H1 (cell line): ENCODE measurements at regions of chr12 and their contacts with region 1.

Region 1: GRCh38 chr12:98998697-98999299 is 353.7 kb downstream of the APAF1 start:
- DNase-seq: no peak
- H3K4me3 ChIP-seq: no peak overlapping the region
- H3K27ac ChIP-seq: no peak overlapping the region
- H3K4me1 ChIP-seq: no peaks in the 10 kb centered on the region
- H3K27me3 ChIP-seq: no peaks in the 10 kb centered on the region
- CTCF ChIP-seq: peak in 2 of 3 experiments; percentile 60 to 61; a peak in 3 of 4 replicates
- EP300 ChIP-seq: no peak
- POLR2A ChIP-seq: no peak
- RAD21 ChIP-seq: peak; percentile 90

Region 2: DNA sequence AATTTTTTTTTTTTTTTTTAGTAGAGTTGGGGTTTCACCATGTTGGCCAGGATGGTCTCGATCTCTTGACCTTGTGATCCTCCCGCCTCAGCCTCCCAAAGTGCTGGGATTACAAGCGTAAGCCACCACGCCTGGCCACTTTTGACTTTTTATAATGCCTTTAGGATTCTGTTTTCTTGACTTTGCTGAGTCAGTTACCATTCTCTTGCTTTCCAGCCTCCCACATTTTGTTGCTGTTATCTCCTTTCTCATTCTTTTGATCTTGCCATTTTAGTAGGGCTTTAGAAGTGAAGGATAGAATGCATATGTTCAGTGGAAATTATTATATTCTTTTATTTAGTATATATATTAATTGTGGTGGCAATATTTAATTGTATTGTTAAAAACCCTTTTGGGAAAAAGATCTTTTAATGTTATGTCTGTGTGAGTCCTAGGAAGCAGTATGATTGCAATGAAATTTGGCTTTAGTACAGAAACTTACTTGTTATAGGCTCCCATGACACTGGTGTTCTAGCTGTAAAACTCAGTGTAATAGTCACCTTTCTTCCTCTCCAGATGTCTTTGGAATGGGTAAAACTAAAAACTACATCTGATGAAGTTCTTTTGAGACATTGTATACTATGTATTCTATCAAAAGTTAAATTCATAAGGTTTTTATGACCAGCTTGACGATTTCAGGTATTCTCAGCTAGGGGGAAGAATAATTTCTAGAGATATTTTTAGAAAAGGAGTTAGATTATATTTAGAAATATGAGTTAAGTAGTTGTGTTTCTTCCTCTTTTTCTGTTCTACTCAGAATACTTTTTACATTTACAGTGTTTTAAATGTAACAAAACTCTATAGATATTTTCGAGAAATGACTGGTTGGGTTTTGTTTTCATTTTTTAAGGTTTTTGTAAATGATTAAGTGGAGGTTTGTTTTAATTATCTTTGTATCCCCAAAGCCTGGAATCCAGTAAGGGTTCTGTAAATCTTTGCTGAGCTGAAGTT is 279.0 kb before region 1 on chr12:
- CTCF ChIA-PET with region 1: interaction called, 22 read pairs
- POLR2A ChIA-PET with region 1: interaction called, 3 read pairs
- DNase-seq: no peak
- H3K4me3 ChIP-seq: no peak overlapping the region
- H3K27ac ChIP-seq: no peak overlapping the region
- H3K4me1 ChIP-seq: no peaks in the 10 kb centered on the region
- H3K27me3 ChIP-seq: no peaks in the 10 kb centered on the region
- CTCF ChIP-seq: no peak
- EP300 ChIP-seq: no peak
- POLR2A ChIP-seq: no peak
- RAD21 ChIP-seq: no peak

Region 3: DNA sequence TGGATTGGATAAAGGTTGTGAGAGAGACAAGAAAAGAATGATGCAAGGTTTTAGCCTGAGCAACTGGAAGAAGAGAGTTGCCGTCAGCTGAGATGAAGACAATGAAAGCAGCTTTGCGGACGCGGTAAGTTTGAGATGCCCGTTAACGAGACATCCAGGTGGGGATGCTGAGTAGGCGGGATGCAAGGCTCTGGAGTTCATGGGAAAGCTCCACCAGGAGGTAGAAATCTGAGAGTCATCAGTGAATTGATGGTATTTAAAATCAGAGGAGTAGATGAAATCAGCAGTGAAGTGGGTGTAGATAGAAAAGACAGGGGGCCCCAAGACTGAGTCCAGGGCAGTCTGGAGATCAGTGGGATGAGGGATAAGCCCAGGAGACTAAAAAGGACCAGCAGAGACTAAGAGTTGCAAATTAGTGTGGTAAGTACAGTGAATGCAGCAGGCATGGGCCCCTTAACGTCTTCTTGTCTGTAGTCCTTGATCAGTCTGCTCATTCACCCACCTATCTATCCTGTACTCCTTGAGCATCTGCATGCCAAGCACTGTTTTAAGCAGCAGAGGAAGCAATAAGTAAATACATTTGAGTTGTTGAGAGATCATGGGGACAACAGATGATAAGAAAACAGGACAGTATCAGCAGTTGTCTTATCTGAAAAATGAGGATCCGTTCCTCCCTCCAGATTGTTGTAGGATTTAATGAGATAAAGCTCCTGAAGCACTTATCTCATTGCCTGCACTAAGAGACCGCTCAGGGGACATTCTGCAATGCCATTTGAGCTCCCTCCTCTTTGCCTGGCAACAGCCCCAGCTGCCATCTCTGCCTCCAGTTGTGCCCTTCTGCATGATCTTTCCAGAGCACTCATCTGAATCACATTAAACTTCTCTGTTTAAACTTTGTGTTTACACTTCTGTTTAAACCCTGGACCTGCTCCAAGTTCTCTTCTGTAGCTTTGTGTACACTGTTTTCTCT is 262.2 kb before region 1 on chr12:
- CTCF ChIA-PET with region 1: interaction called, 28 read pairs
- POLR2A ChIA-PET with region 1: no interaction called
- DNase-seq: no peak
- H3K4me3 ChIP-seq: no peak overlapping the region
- H3K27ac ChIP-seq: no peak overlapping the region
- H3K4me1 ChIP-seq: peaks cover 0 to 3% (median under 1%) of the 10 kb centered on the region in 4 experiments; a peak in 1 of 7 replicates
- H3K27me3 ChIP-seq: no peaks in the 10 kb centered on the region
- CTCF ChIP-seq: no peak
- EP300 ChIP-seq: no peak
- POLR2A ChIP-seq: no peak
- RAD21 ChIP-seq: no peak

Region 4: GRCh38 chr12:98948343-98948949 is 50.4 kb before region 1 on chr12:
- CTCF ChIA-PET with region 1: interaction called, 32 read pairs
- POLR2A ChIA-PET with region 1: no interaction called
- DNase-seq: no peak
- H3K4me3 ChIP-seq: no peak overlapping the region
- H3K27ac ChIP-seq: no peak overlapping the region
- H3K4me1 ChIP-seq: peaks cover 0 to 3% (median 1%) of the 10 kb centered on the region in 4 experiments; a peak in 4 of 7 replicates
- H3K27me3 ChIP-seq: no peaks in the 10 kb centered on the region
- CTCF ChIP-seq: no peak
- EP300 ChIP-seq: no peak
- POLR2A ChIP-seq: no peak
- RAD21 ChIP-seq: no peak

Region 5: DNA sequence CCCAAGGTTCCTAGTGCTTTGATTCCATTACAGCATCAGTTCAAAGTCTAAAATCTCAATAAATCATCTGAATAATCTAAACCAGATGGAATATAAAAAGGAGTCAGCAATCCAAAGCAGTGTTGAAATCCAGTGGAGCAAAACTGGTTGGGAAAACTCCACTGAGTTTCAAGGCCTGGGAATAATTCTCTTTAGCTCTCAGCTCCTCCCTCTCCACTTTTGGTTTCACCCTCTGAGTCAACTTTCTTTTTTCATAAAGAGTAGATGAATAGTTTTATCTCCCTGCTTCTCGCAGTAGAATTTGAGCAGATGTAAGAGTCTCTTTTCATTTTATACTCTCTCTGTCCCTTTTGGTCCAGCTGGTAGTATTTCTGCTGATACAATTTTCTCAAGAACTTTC is 15.2 kb before region 1 on chr12:
- CTCF ChIA-PET with region 1: interaction called, 16 read pairs
- POLR2A ChIA-PET with region 1: no interaction called
- DNase-seq: no peak
- H3K4me3 ChIP-seq: no peak overlapping the region
- H3K27ac ChIP-seq: no peak overlapping the region
- H3K4me1 ChIP-seq: no peaks in the 10 kb centered on the region
- H3K27me3 ChIP-seq: no peaks in the 10 kb centered on the region
- CTCF ChIP-seq: no peak
- EP300 ChIP-seq: no peak
- POLR2A ChIP-seq: no peak
- RAD21 ChIP-seq: no peak